Gastrocnemius medialis (tissue), 4 donors: ENCODE measurements at regions of chr1 and their contacts with region 1.

Region 1: DNA sequence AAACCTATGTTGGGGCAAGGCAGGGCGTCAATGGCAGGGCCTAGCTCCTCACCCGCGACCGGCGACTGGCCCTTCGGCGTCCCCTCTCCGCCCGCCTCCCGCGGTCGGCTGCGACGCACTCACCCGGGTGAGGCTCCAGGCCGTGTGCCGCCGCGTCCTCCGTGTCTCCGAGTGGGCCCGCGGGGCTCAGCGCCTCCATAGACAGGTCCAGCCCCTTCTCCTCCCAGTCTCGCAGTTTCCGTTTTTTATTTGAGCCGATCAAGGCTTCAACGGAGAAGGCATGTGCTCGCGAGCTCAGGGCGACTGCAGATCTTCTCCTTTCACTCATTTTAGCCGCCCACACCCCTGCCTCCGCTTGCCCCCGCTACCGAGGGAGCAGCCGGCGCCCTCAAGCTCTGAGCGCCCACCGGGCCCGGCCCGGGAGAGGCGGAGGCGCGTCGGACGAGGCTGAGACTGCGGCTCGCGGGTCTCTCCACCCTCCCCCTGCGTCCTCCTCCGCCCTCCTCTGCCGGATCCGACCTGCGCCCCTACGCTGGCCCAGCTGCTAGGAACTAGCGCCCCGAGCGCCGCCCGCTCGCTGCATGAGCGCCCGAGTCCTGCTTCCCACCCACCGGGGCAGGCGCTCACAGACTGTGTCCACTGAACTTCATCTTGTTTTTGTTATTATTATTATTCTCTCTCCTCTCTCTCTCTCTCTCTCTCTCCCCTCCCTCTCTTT is 516 bp downstream of the TBX15 start:
- DNase-seq: peak in 1 of 2 donors; percentile 64
- ATAC-seq: peak; percentile 45 to 53
- H3K4me3 ChIP-seq: peak overlapping the region; percentile 77 to 87 (median 83)
- H3K27ac ChIP-seq: peak overlapping the region; percentile 85 to 96 (median 94)
- H3K4me1 ChIP-seq: peaks cover 23 to 33% of the 10 kb centered on the region in 2 donors
- H3K27me3 ChIP-seq: no peaks in the 10 kb centered on the region
- CTCF ChIP-seq: peak in 1 of 5 experiments; percentile 10
- POLR2A ChIP-seq: peak; percentile 36 to 69

Region 2: GRCh38 chr1:117367047-117368018 is 1620.3 kb before region 1 on chr1 and contains the start of gene MAN1A2:
- in situ Hi-C with region 1: no loop called
- intact Hi-C with region 1: loop called (anchors 5 kb)
- DNase-seq: peak; percentile 91 to 92
- ATAC-seq: peak; percentile 75 to 86
- H3K4me3 ChIP-seq: peak within 1 kb of the TSS; percentile 67 to 94 (median 88)
- H3K27ac ChIP-seq: peak within 1 kb of the TSS; percentile 92 to 97 (median 96)
- H3K4me1 ChIP-seq: peaks cover 37 to 43% of the 10 kb centered on the region in 2 donors
- H3K27me3 ChIP-seq: no peaks in the 10 kb centered on the region
- CTCF ChIP-seq: peak in 1 of 5 experiments; percentile 17
- POLR2A ChIP-seq: peak; percentile 90 to 95
- total RNA-seq, gene MAN1A2: 14.9 to 37.0 (median 28.3) TPM

Region 3: GRCh38 chr1:118304722-118305359 is 682.8 kb before region 1 on chr1:
- in situ Hi-C with region 1: no loop called
- intact Hi-C with region 1: loop called (anchors 5 kb)
- DNase-seq: peak in 1 of 2 donors; percentile 52
- ATAC-seq: peak; percentile 24 to 42
- H3K4me3 ChIP-seq: no peak overlapping the region
- H3K27ac ChIP-seq: peak overlapping the region; percentile 84 to 99 (median 89)
- H3K4me1 ChIP-seq: peaks cover 52 to 53% of the 10 kb centered on the region in 2 donors
- H3K27me3 ChIP-seq: no peaks in the 10 kb centered on the region
- CTCF ChIP-seq: peak; percentile 35 to 75 (median 60)
- POLR2A ChIP-seq: no peak

Region 4: DNA sequence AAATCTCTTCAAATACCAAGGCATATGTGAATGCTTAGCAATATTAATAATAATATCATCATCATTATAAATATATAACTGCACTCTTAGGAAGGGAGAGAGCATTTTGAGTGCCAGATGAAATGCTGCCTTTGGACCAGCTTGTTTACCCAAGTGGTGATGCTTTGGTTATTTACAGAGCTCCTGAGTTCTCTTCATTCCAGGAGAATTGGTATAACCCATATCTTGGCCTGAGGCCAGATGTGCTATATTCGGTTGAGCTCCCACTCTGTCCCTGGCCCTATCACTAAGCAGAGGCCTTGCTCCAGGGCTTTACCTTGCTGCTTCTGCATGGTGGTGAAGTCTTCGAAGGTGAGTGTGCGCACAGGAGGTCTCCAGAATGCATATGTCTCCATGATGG is 88.9 kb before region 1 on chr1:
- in situ Hi-C with region 1: no loop called
- intact Hi-C with region 1: loop called (anchors 5 kb)
- DNase-seq: no peak
- ATAC-seq: no peak
- H3K4me3 ChIP-seq: no peak overlapping the region
- H3K27ac ChIP-seq: no peak overlapping the region
- H3K4me1 ChIP-seq: peaks cover 24 to 30% of the 10 kb centered on the region in 2 donors
- H3K27me3 ChIP-seq: no peaks in the 10 kb centered on the region
- CTCF ChIP-seq: no peak
- POLR2A ChIP-seq: no peak

Region 5: GRCh38 chr1:118949315-118949714 is 38.3 kb before region 1 on chr1:
- in situ Hi-C with region 1: no loop called
- intact Hi-C with region 1: loop called (anchors 2 kb)
- DNase-seq: peak; percentile 83 to 87
- ATAC-seq: peak; percentile 50 to 72
- H3K4me3 ChIP-seq: no peak overlapping the region
- H3K27ac ChIP-seq: peak overlapping the region; percentile 83 to 93 (median 88)
- H3K4me1 ChIP-seq: peaks cover 92 to 97% of the 10 kb centered on the region in 2 donors
- H3K27me3 ChIP-seq: no peaks in the 10 kb centered on the region
- CTCF ChIP-seq: no peak
- POLR2A ChIP-seq: peak in 1 of 2 donors; percentile 31

Region 6: GRCh38 chr1:119000371-119001180 is 12.9 kb after region 1 on chr1:
- in situ Hi-C with region 1: no loop called
- intact Hi-C with region 1: loop called (anchors 1 kb)
- DNase-seq: no peak
- ATAC-seq: no peak
- H3K4me3 ChIP-seq: peak overlapping the region; percentile 49 to 64 (median 50)
- H3K27ac ChIP-seq: peak overlapping the region; percentile 30 to 66 (median 61)
- H3K4me1 ChIP-seq: peaks cover 0 to 7% of the 10 kb centered on the region in 2 donors
- H3K27me3 ChIP-seq: peaks cover 8 to 28% (median 9%) of the 10 kb centered on the region in 3 donors
- CTCF ChIP-seq: no peak
- POLR2A ChIP-seq: no peak

Region 7: DNA sequence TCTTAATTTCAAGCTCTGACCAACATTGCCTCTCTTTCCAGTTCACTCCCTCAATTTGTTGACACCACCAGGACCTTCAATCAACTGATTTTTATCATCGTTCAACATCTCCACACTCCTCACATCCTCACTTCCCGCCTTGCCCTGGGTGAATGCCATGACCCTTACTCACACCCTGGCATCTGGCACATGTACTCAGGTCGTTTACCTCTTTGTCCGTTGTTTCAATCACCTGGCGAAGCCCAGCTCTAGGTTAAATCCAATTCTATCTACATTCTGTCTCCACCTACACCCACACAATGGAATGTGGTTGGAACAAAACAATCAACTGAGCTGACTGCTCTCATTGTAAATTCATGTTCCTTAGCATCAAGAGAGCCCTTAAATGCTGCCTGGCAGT is 24.7 kb after region 1 on chr1:
- in situ Hi-C with region 1: no loop called
- intact Hi-C with region 1: no loop called
- DNase-seq: no peak
- ATAC-seq: no peak
- H3K4me3 ChIP-seq: no peak overlapping the region
- H3K27ac ChIP-seq: no peak overlapping the region
- H3K4me1 ChIP-seq: no peaks in the 10 kb centered on the region
- H3K27me3 ChIP-seq: peaks cover 0 to 8% (median 0%) of the 10 kb centered on the region in 3 donors
- CTCF ChIP-seq: no peak
- POLR2A ChIP-seq: no peak